Aorta (tissue), 5 donors: ENCODE measurements at regions of chr3 and their contacts with region 1.

Region 1: GRCh38 chr3:49500732-49501609 is 30.9 kb downstream of the DAG1 start:
- DNase-seq: peak; percentile 80 to 83
- ATAC-seq: peak; percentile 86
- H3K4me3 ChIP-seq: no peak overlapping the region
- H3K27ac ChIP-seq: peak overlapping the region; percentile 95 to 98
- H3K4me1 ChIP-seq: peaks cover 3 to 6% of the 10 kb centered on the region in 2 donors
- H3K27me3 ChIP-seq: no peaks in the 10 kb centered on the region

Region 2: DNA sequence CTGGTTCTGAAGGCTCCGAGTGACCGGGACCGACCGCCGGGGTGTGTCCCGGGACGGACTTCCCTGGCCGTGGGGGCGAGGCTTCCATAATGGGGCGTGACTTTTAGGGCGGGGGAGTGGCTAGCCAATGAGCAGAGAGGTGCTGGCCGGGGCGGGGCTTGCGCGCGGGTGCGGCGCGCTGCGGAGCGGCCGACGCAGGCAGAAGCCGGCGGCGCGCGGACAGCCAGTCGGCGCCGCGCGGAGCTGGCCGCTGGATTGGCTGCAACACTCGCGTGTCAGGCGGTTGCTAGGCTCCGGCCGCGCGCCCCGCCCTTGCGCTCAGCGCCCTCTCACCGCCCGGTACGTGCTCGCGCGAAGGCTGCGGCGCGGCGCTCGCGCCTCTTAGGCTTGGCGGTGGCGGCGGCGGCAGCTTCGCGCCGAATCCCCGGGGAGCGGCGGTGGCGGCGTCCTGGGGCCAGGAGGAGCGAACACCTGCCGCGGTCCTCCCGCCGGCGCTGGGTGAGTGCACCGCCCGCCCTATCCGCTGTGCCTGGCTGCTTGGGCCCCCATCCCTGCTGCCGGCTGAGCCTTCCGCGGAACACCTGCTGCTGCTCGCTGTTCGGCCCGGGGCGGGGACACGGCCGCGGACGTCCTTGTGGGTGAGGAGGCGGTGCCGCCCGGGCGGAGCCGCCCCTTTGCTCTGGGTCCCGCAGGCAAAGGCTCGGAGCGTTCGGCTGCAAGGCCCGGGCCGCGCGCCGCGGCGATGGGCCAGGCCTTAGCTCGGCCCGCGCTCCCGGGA is 30.8 kb before region 1 on chr3 and contains the start of gene DAG1:
- intact Hi-C with region 1: loop called in 1 of 2 experiments (anchors 5 kb)
- DNase-seq: peak; percentile 98 to 99
- ATAC-seq: peak; percentile 96
- H3K4me3 ChIP-seq: peak within 1 kb of the TSS; percentile 69 to 84
- H3K27ac ChIP-seq: peak within 1 kb of the TSS; percentile 88 to 96
- H3K4me1 ChIP-seq: no peaks in the 10 kb centered on the region
- H3K27me3 ChIP-seq: no peaks in the 10 kb centered on the region
- total RNA-seq, gene DAG1: 70.3 to 87.4 TPM